ENCODE measurements at regions of chr6 and their contacts with region 1.

Region 1: GRCh38 chr6:144582939-144583613 is 297.9 kb downstream of the UTRN start:
- DNase-seq: no peak
- H3K4me3 ChIP-seq: no peak overlapping the region
- H3K4me3 Mint-ChIP-seq: no peak overlapping the region
- H3K27ac Mint-ChIP-seq: peak overlapping the region; percentile 42
- H3K4me1 ChIP-seq: no peaks in the 10 kb centered on the region
- H3K4me1 Mint-ChIP-seq: peaks cover 16% of the 10 kb centered on the region
- H3K27me3 ChIP-seq: no peaks in the 10 kb centered on the region
- H3K27me3 Mint-ChIP-seq: no peaks in the 10 kb centered on the region
- CTCF ChIP-seq: no peak

Region 2: GRCh38 chr6:144659202-144660182 is 76.4 kb after region 1 on chr6:
- CTCF ChIA-PET with region 1: no interaction called
- POLR2A ChIA-PET with region 1: no interaction called
- intact Hi-C with region 1: loop called (anchors 1 kb)
- DNase-seq: peak; percentile 21 to 39
- H3K4me3 ChIP-seq: no peak overlapping the region
- H3K4me3 Mint-ChIP-seq: no peak overlapping the region
- H3K27ac Mint-ChIP-seq: peak overlapping the region; percentile 79
- H3K4me1 ChIP-seq: peaks cover 65% of the 10 kb centered on the region
- H3K4me1 Mint-ChIP-seq: peaks cover 41% of the 10 kb centered on the region
- H3K27me3 ChIP-seq: no peaks in the 10 kb centered on the region
- H3K27me3 Mint-ChIP-seq: no peaks in the 10 kb centered on the region
- CTCF ChIP-seq: no peak

Region 3: GRCh38 chr6:144778773-144779492 is 195.9 kb after region 1 on chr6:
- CTCF ChIA-PET with region 1: interaction called, 5 read pairs
- POLR2A ChIA-PET with region 1: no interaction called
- intact Hi-C with region 1: loop called (anchors 1 kb)
- DNase-seq: peak in 1 of 2 experiments; percentile 3
- H3K4me3 ChIP-seq: no peak overlapping the region
- H3K4me3 Mint-ChIP-seq: no peak overlapping the region
- H3K27ac Mint-ChIP-seq: no peak overlapping the region
- H3K4me1 ChIP-seq: no peaks in the 10 kb centered on the region; the same call in 1 of the 2 replicates
- H3K4me1 Mint-ChIP-seq: peaks cover 22% of the 10 kb centered on the region
- H3K27me3 ChIP-seq: no peaks in the 10 kb centered on the region
- H3K27me3 Mint-ChIP-seq: no peaks in the 10 kb centered on the region
- CTCF ChIP-seq: peak; percentile 29 to 45

Region 4: GRCh38 chr6:145028144-145028818 is 445.2 kb after region 1 on chr6:
- CTCF ChIA-PET with region 1: interaction called, 3 read pairs
- POLR2A ChIA-PET with region 1: no interaction called
- intact Hi-C with region 1: loop called (anchors 5 kb)
- DNase-seq: peak in 1 of 2 experiments; percentile 24
- H3K4me3 ChIP-seq: no peak overlapping the region
- H3K4me3 Mint-ChIP-seq: no peak overlapping the region
- H3K27ac Mint-ChIP-seq: no peak overlapping the region
- H3K4me1 ChIP-seq: peaks cover 8% of the 10 kb centered on the region; the same call in 1 of the 2 replicates
- H3K4me1 Mint-ChIP-seq: peaks cover 6% of the 10 kb centered on the region
- H3K27me3 ChIP-seq: no peaks in the 10 kb centered on the region
- H3K27me3 Mint-ChIP-seq: peaks cover 5% of the 10 kb centered on the region
- CTCF ChIP-seq: peak; percentile 56 to 70

Region 5: DNA sequence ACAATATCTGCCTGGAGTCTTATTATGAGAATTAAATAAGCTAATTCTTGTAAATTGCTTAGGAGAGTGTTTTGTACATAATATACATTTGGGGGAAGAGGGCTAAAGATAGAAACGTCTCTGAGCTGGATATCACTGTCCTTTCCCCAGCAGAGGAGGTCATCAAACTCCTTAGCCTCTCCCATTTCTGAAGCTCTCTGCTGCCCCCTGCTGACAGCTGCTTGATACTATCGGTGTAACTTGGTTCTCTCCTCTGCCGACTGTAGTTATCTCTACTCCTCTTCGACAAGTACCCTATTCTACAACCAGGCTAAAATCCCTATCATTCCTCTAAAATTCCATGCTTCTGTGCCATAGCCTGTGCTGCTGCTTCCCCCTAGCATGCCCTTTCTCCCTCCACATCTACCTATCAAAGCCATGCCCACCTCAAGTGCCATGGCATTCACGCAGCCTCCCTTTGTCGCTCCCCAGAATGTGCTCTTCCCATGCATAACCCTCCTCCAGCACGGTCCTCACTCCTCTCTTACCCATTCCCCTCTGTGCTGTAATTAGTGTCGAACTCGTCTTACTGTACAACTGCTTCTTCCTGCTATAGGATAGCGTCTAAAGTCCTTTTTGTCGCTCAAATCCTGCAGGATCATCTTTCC is 1051.0 kb after region 1 on chr6:
- CTCF ChIA-PET with region 1: no interaction called
- POLR2A ChIA-PET with region 1: no interaction called
- intact Hi-C with region 1: loop called (anchors 10 kb)
- DNase-seq: peak; percentile 80 to 87
- H3K4me3 ChIP-seq: no peak overlapping the region
- H3K4me3 Mint-ChIP-seq: no peak overlapping the region
- H3K27ac Mint-ChIP-seq: no peak overlapping the region
- H3K4me1 ChIP-seq: no peaks in the 10 kb centered on the region
- H3K4me1 Mint-ChIP-seq: peaks cover 15% of the 10 kb centered on the region
- H3K27me3 ChIP-seq: no peaks in the 10 kb centered on the region
- H3K27me3 Mint-ChIP-seq: no peaks in the 10 kb centered on the region
- CTCF ChIP-seq: peak; percentile 85 to 90

Measured in Caco-2 (cell line).